Heart left ventricle (tissue), 16 donors: ENCODE measurements at regions of chr6 and their contacts with region 1.

Region 1: GRCh38 chr6:11890849-11891248 is 112.2 kb upstream of the ADTRP start:
- DNase-seq: no peak
- ATAC-seq: no peak
- H3K4me3 ChIP-seq: no peak overlapping the region
- H3K27ac ChIP-seq: no peak overlapping the region
- H3K4me1 ChIP-seq: no peaks in the 10 kb centered on the region
- H3K27me3 ChIP-seq: no peaks in the 10 kb centered on the region
- CTCF ChIP-seq: no peak
- POLR2A ChIP-seq: no peak

Region 2: GRCh38 chr6:11711003-11711983 is 179.6 kb before region 1 on chr6:
- intact Hi-C with region 1: loop called in 1 of 10 experiments (anchors 10 kb)
- DNase-seq: no peak
- ATAC-seq: no peak
- H3K4me3 ChIP-seq: no peak overlapping the region
- H3K27ac ChIP-seq: peak overlapping the region in 2 of 12 donors; percentile 9 to 14
- H3K4me1 ChIP-seq: peaks cover 0 to 41% (median 10%) of the 10 kb centered on the region in 12 donors
- H3K27me3 ChIP-seq: no peaks in the 10 kb centered on the region
- CTCF ChIP-seq: no peak
- POLR2A ChIP-seq: no peak